SK-MEL-5 (cell line): ENCODE measurements at regions of chr7 and their contacts with region 1.

Region 1: DNA sequence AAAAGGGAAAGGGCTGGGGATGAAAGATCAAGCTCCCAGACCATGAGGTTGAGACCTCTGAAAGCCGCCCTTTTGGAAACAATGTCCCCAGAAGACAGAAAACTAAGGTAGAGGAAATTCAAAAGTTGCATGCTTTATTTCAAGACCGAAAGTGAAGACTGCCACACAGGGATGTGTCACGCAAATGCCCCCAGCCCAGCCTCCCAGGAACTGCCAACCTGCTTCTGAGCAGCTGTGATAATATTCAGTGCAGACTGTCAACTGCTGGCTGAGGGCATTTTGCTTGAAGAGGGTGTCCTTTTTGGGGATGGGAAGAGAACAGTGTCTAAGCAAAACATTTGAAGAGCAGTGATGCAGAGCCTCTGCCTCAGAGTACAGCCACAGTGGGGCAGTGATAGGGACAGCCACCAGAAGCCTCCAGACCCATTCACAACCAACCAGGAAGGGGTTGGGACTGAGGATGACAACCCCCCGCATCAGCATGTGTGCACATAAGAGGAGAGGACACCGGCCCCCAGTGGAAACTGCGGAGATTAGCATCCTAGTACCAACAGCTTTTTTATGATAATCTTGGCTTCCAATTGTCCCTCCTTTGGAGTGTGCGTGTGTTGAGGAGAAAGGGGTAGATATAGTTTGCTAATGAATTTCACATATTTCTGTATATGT is 34.7 kb upstream of the NFE2L3 start:
- DNase-seq: peak; percentile 53

Region 2: GRCh38 chr7:26052721-26053120 is 64.6 kb before region 1 on chr7:
- in situ Hi-C with region 1: no loop called
- DNase-seq: no peak

Region 3: GRCh38 chr7:26199301-26200037 is 82.2 kb after region 1 on chr7:
- in situ Hi-C with region 1: loop called (anchors 5 kb)
- DNase-seq: peak; percentile 91